BJ (cell line): ENCODE measurements at regions of chr5 and their contacts with region 1.

Region 1: DNA sequence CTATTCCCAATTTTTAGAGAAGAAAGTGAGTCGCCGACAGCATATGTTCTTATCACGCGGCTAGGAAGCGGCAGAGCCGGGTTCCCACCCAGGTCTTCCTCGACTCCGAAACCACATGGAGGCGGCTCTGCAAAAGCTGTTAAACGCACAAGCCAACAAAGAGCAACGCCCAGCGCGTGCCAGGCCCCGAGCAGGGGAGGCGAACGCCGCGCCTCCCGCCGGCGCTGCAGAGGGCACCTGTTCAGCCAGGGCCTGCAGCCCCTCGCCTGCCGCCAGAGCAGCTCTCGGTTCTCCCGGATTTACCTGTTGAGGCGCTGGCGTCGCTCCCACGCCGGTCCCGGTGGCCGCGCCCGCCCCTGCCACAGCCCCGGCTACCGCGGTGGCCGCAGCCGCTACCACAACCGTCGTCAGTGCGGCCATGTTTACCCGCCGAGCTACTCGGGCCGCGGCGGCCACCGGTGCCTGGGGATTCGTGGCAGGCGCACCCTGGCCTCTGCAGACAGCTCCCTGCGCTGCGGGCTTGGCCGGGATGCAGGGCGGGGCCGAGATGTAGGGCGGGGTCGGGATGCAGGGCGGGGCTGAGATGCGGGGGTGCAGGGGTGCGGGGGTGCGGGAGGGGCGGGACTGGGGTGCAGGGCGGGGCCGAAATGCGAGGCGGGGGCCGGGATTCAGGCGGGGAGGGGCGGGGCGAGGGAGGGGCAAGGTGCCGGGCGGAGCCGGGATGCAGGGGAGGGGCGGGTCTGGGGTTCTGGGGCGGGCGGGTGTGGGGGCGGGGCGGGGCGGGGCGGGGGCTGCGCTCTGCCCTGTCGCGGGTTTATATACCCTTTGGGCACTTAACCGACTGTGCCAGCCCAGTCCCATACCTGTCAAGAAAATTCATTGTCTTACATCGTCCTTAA is at the start of gene CCDC112:
- DNase-seq: no peak
- H3K4me3 ChIP-seq: peak within 1 kb of the TSS; percentile 83
- H3K27me3 ChIP-seq: no peaks in the 10 kb centered on the region
- CTCF ChIP-seq: no peak
- polyA plus RNA-seq, gene CCDC112: 0.40 and 1.1 TPM in 2 replicates

Region 2: GRCh38 chr5:115309751-115310370 is 13.5 kb after region 1 on chr5:
- CTCF ChIA-PET with region 1: interaction called, 24 read pairs
- POLR2A ChIA-PET with region 1: no interaction called
- DNase-seq: no peak
- H3K4me3 ChIP-seq: no peak overlapping the region
- H3K27me3 ChIP-seq: no peaks in the 10 kb centered on the region
- CTCF ChIP-seq: peak; percentile 50